ENCODE measurements at regions of chr10 and their contacts with region 1.

Region 1: GRCh38 chr10:30359373-30360206 is 10.5 kb upstream of the MTPAP start:
- DNase-seq: peak; percentile 56
- H3K4me3 ChIP-seq: no peak overlapping the region
- H3K27ac ChIP-seq: no peak overlapping the region
- H3K4me1 ChIP-seq: no peaks in the 10 kb centered on the region
- H3K27me3 ChIP-seq: peaks cover 2 to 9% of the 10 kb centered on the region in 2 experiments
- CTCF ChIP-seq: peak; percentile 78 to 88
- POLR2A ChIP-seq: no peak

Region 2: DNA sequence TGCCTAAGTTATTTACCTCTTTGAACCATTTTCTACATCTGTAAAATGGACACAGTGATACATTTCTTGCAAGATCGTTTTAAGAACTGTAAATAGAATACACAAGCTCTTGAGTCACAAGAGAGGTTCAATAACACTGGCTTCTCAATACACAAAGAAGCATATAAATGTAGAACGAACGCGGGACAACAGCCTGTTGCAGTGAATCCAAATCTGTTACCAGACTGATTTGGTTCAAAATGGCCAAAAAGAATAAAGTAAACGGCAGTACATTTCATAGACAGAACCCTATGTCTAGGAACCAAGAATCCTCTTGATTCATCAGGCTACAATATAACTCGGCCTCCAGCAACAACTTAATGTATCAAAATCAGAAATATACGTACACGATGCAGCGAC is 11.2 kb before region 1 on chr10:
- CTCF ChIA-PET with region 1: interaction called, 27 read pairs
- POLR2A ChIA-PET with region 1: no interaction called
- dilution Hi-C with region 1: no loop called
- intact Hi-C with region 1: no loop called
- DNase-seq: no peak
- H3K4me3 ChIP-seq: peak overlapping the region; percentile 40 to 83 (median 67)
- H3K27ac ChIP-seq: peak overlapping the region; percentile 76
- H3K4me1 ChIP-seq: peaks cover 9% of the 10 kb centered on the region
- H3K27me3 ChIP-seq: peaks cover 0 to 4% of the 10 kb centered on the region in 2 experiments
- CTCF ChIP-seq: no peak
- POLR2A ChIP-seq: no peak

Measured in endothelial cell of umbilical vein (primary cell).